Activated CD4-positive, alpha-beta T cell treated with anti-CD3 and anti-CD28 coated beads for 36 hours (primary cell): ENCODE measurements at regions of chr16 and their contacts with region 1.

Region 1: GRCh38 chr16:86563489-86564345 is 2.9 kb upstream of the FOXC2 start:
- DNase-seq: peak; percentile 94
- ATAC-seq: peak; percentile 88
- H3K4me3 Mint-ChIP-seq: no peak overlapping the region
- H3K27ac Mint-ChIP-seq: no peak overlapping the region
- H3K4me1 Mint-ChIP-seq: peaks cover 16% of the 10 kb centered on the region
- H3K27me3 Mint-ChIP-seq: peaks cover 50% of the 10 kb centered on the region

Region 2: DNA sequence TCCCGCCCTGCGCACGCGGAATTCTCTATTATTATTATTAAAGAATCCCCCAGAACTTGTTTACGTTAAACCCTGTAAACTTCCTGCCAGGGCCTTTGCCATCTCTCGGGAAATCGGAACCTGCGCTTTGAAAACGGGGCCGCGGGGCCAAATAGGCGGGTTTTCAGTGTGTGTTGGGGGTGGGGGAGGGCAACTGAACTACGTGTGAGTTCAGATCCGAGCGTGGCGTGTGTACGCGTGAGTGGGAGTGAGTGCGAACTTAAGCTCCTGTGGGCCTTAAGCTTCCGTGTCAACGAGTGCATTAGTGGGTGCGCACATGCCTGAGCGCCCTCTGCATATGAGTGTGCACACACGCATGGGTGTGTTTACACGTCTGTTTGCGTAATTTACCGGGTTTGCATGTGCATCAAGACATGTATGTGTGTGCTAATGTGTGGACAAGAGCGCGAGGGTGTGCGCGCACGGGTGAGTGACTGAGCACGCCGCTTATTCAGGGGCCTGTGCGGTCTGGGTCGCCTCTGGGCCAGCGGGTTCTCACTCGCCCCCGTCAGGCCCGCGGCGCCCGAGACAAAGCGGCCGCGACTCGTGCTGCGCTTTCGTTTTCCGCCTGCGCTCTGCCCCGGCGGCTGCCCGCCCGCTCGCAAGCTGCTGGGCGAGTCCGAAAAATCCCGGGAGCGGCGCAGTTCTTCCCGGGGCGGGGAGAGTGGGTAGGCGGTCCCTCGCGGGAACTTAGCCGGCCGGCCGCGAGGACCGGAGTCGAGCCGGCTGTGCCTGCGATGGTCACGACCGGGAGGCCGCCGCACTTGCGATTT is 54.6 kb before region 1 on chr16:
- CTCF ChIA-PET with region 1: interaction called, 5 read pairs
- POLR2A ChIA-PET with region 1: no interaction called
- intact Hi-C with region 1: loop called (anchors 2 to 5 kb)
- DNase-seq: peak; percentile 41
- ATAC-seq: peak; percentile 23
- H3K4me3 Mint-ChIP-seq: peak overlapping the region; percentile 56
- H3K27ac Mint-ChIP-seq: peak overlapping the region; percentile 0
- H3K4me1 Mint-ChIP-seq: peaks cover 32% of the 10 kb centered on the region
- H3K27me3 Mint-ChIP-seq: peaks cover 61% of the 10 kb centered on the region

Region 3: GRCh38 chr16:86634292-86634691 is 70.6 kb after region 1 on chr16:
- CTCF ChIA-PET with region 1: no interaction called
- POLR2A ChIA-PET with region 1: no interaction called
- intact Hi-C with region 1: no loop called
- DNase-seq: no peak
- ATAC-seq: no peak
- H3K4me3 Mint-ChIP-seq: no peak overlapping the region
- H3K27ac Mint-ChIP-seq: no peak overlapping the region
- H3K4me1 Mint-ChIP-seq: no peaks in the 10 kb centered on the region
- H3K27me3 Mint-ChIP-seq: peaks cover 18% of the 10 kb centered on the region

Region 4: DNA sequence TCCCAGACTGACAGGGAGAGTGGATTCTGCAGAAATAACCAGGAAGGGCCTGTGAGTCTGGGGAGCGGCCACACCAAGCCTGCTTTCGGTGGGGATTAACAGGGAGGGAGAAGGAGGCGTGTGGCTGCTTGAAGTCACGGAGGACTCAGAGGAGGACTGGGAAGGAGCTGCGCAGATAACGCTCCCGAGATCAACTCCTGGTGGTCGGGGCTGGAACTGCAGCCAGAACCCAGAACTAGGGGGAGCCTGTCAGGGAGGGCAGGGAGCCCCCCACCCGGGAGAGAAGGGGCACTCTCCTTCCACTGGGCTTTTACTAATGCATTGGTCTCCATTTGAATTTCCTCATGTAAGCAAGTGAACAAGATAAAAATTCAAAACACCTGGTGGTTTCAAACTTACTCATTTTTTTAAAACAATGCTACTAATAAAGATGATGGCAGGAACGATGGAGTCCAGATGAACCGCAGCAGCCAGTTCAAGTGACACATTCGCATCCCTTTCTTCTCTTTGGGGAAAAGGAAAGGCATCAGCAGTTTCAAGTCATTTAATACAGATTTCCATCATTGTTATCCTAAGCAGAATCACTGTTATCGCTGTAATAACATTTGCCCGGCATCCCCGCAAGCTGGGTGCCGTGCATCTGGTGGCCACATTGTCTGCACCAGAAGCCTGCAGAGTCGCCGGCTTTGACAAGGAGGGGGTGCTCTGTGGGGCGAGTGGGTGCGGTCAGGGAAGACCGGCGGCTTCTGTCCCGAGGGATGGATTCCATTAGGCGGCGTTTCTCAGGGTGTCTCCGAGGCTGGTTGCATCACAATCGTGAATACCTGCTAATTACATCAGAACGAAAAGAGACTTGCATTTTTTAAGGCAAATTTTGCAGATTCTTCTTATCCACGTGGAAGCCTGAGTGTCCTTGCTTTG is 197.7 kb after region 1 on chr16:
- CTCF ChIA-PET with region 1: interaction called, 4 read pairs
- POLR2A ChIA-PET with region 1: no interaction called
- intact Hi-C with region 1: loop called in 1 of 2 experiments (anchors 1 kb)
- DNase-seq: peak; percentile 63
- ATAC-seq: peak; percentile 33
- H3K4me3 Mint-ChIP-seq: no peak overlapping the region
- H3K27ac Mint-ChIP-seq: no peak overlapping the region
- H3K4me1 Mint-ChIP-seq: no peaks in the 10 kb centered on the region
- H3K27me3 Mint-ChIP-seq: peaks cover 32% of the 10 kb centered on the region

Region 5: DNA sequence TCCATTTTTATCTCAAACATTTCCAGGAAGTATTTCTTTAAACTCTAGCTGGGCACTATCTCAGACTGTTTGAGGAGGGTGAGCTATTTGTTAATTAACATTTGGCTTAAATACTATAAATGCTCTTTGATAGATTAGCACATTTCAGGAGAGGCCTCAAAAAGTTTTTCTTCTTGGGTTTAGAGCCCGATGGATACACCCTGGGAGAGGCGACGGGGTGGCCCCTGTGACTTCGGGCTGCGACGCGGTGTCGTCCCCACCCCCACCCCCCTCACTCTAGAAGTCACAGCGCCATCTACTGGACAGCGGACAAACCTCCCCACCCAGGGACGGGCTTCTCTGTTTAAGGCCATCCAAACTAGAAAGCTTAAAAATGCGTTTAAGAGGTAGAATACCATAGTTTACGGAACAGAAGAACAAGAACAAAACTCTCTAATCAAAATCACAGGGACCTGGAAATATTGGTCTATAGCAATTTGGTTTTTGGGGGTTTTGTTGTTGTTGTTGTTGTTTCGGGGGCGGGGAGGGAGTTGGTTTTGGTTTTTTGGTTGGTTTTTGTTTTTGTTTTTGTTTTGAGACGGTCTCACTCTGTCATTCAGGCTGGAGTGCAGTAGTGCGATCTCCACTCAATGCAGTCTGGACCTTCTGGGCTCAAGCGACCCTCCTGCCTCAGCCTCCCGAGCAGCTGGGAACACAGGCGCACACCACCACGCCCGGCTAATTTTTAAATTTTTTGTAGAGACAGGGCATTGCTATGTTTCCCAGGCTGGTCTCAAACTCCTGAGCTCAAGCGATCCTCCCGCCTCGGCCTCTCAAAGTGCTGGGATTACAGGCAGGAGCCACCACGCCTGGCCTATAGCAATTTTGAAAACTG is 499.1 kb after region 1 on chr16:
- CTCF ChIA-PET with region 1: interaction called, 14 read pairs
- POLR2A ChIA-PET with region 1: interaction called, 3 read pairs
- intact Hi-C with region 1: loop called (anchors 1 kb)
- DNase-seq: peak; percentile 83
- ATAC-seq: peak; percentile 66
- H3K4me3 Mint-ChIP-seq: no peak overlapping the region
- H3K27ac Mint-ChIP-seq: no peak overlapping the region
- H3K4me1 Mint-ChIP-seq: no peaks in the 10 kb centered on the region
- H3K27me3 Mint-ChIP-seq: peaks cover 51% of the 10 kb centered on the region

Region 6: GRCh38 chr16:87203060-87203656 is 639.4 kb after region 1 on chr16:
- CTCF ChIA-PET with region 1: no interaction called
- POLR2A ChIA-PET with region 1: no interaction called
- intact Hi-C with region 1: loop called in 1 of 2 experiments (anchors 10 kb)
- DNase-seq: peak; percentile 79
- ATAC-seq: peak; percentile 83
- H3K4me3 Mint-ChIP-seq: no peak overlapping the region
- H3K27ac Mint-ChIP-seq: no peak overlapping the region
- H3K4me1 Mint-ChIP-seq: no peaks in the 10 kb centered on the region
- H3K27me3 Mint-ChIP-seq: peaks cover 8% of the 10 kb centered on the region

Region 7: DNA sequence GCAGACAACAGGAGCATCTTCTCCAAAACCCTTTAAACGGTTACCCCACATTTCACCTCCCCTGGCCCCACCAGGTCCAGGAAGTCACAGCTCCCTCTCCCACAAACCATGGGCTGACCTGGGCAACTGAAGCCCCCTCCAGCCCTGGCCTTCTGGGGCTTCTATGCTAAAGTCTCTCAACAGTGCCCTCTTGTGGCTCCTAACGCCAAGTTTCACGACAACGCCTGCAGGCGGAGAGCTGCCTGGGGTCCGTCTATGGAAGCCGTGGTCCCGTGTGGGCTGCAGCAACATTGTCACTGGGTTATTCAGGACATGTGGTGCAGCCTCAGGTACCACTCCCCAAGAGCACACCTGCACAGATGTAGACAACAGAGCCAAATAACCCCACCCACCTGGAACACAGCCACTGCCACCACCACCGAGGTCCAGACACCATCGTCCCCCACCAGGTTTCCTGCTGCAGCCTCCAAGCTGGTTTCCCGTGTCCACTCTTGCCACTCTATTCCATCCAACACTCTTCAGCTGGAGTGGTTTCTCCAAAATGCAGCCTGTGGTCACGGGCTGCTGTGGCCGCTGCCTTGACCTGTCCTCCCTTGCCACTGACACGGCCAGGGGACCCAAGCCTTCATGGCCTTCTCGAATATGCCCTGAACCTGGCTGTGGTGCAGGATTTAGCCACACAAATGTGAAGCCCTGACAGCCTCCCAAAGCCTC is 734.4 kb after region 1 on chr16:
- CTCF ChIA-PET with region 1: interaction called, 3 read pairs
- POLR2A ChIA-PET with region 1: no interaction called
- intact Hi-C with region 1: loop called in 1 of 2 experiments (anchors 5 kb)
- DNase-seq: peak; percentile 60
- ATAC-seq: peak; percentile 40
- H3K4me3 Mint-ChIP-seq: no peak overlapping the region
- H3K27ac Mint-ChIP-seq: no peak overlapping the region
- H3K4me1 Mint-ChIP-seq: no peaks in the 10 kb centered on the region
- H3K27me3 Mint-ChIP-seq: no peaks in the 10 kb centered on the region